GM12878 (cell line): ENCODE measurements at regions of chr3 and their contacts with region 1.

Region 1: GRCh38 chr3:33883538-33883950 is 85.1 kb downstream of the PDCD6IP start:
- DNase-seq: no peak
- ATAC-seq: peak; percentile 64
- H3K4me3 ChIP-seq: no peak overlapping the region
- H3K27ac ChIP-seq: no peak overlapping the region
- H3K4me1 ChIP-seq: peaks cover 4% of the 10 kb centered on the region; the same call in 1 of the 2 replicates
- H3K27me3 ChIP-seq: no peaks in the 10 kb centered on the region
- CTCF ChIP-seq: peak; percentile 63 to 77 (median 75)
- EP300 ChIP-seq: no peak
- POLR2A ChIP-seq: no peak
- RAD21 ChIP-seq: peak; percentile 78

Region 2: GRCh38 chr3:33915791-33916546 is 32.4 kb after region 1 on chr3:
- CTCF ChIA-PET with region 1: interaction called, 14 read pairs
- POLR2A ChIA-PET with region 1: no interaction called
- RAD21 ChIA-PET with region 1: interaction called, 6 read pairs
- SMC1A ChIA-PET with region 1: no interaction called
- in situ Hi-C with region 1: no loop called
- intact Hi-C with region 1: no loop called
- DNase-seq: no peak
- ATAC-seq: peak; percentile 80
- H3K4me3 ChIP-seq: no peak overlapping the region
- H3K27ac ChIP-seq: no peak overlapping the region
- H3K4me1 ChIP-seq: no peaks in the 10 kb centered on the region
- H3K27me3 ChIP-seq: no peaks in the 10 kb centered on the region; a peak in 1 of 4 replicates
- CTCF ChIP-seq: peak in 2 of 3 experiments; percentile 16 to 48; a peak in 3 of 6 replicates
- EP300 ChIP-seq: no peak
- POLR2A ChIP-seq: no peak
- RAD21 ChIP-seq: peak; percentile 82

Region 3: DNA sequence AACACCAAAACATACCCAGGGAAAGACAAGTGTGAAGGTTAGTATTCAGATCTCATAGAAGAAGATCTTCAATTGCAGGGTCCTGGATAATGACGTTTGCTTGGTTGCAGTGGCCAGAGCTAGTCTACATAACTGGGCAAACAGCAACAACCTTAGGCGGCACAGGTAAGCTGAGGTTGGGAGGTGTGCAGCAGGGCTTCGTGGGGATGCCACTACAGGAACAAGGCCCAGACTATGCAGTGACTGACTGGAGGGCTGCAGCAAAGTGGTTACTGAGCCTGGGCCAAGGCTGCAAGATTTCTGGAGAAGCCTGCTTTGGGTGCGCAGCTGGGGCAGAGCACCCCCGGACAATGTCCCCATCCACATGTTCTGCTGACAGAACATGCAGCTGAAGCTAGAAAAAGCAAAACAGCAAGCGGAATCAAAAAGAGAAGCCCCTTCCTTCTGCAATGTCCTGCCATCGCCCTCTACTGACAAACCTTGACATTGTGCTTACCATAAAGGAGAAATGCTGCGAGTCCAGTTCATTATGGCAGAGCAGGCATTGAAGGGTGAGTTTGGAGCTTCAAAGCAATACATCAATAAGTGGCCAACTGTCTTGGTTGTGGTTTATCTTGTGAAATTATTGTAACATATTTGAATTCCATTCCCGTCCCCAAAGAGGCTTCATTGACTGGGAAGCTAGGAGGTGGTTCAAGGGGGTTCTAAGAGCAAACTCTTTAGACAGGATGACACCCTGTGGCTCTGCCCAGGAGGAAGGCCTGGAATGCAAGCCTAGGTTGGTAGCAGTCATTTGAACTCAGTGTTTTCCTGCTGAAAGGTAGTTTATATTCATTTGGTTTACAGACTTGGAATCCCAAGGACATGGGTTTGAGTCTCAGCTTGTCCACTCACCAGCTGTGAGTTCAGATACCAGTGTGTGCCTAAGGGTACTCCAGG is 131.9 kb after region 1 on chr3:
- CTCF ChIA-PET with region 1: interaction called, 20 read pairs
- POLR2A ChIA-PET with region 1: no interaction called
- RAD21 ChIA-PET with region 1: interaction called, 3 read pairs
- SMC1A ChIA-PET with region 1: interaction called, 10 read pairs
- in situ Hi-C with region 1: no loop called
- intact Hi-C with region 1: loop called (anchors 5 kb)
- DNase-seq: no peak
- ATAC-seq: peak; percentile 53; the same call in 2 of the 3 replicates
- H3K4me3 ChIP-seq: no peak overlapping the region
- H3K27ac ChIP-seq: no peak overlapping the region
- H3K4me1 ChIP-seq: peaks cover 10% of the 10 kb centered on the region; the same call in 1 of the 2 replicates
- H3K27me3 ChIP-seq: no peaks in the 10 kb centered on the region
- CTCF ChIP-seq: peak; percentile 5 to 54 (median 21); a peak in 4 of 6 replicates
- EP300 ChIP-seq: no peak
- POLR2A ChIP-seq: no peak
- RAD21 ChIP-seq: peak; percentile 35

Region 4: GRCh38 chr3:34106879-34107278 is 223.3 kb after region 1 on chr3:
- CTCF ChIA-PET with region 1: interaction called, 9 read pairs
- POLR2A ChIA-PET with region 1: no interaction called
- RAD21 ChIA-PET with region 1: interaction called, 11 read pairs
- SMC1A ChIA-PET with region 1: interaction called, 3 read pairs
- in situ Hi-C with region 1: no loop called
- intact Hi-C with region 1: no loop called
- DNase-seq: peak; percentile 51
- ATAC-seq: peak; percentile 73
- H3K4me3 ChIP-seq: no peak overlapping the region
- H3K27ac ChIP-seq: peak overlapping the region; percentile 60
- H3K4me1 ChIP-seq: peaks cover 36% of the 10 kb centered on the region
- H3K27me3 ChIP-seq: no peaks in the 10 kb centered on the region
- CTCF ChIP-seq: peak; percentile 57 to 78 (median 69)
- EP300 ChIP-seq: no peak
- POLR2A ChIP-seq: no peak
- RAD21 ChIP-seq: peak; percentile 69

Region 5: DNA sequence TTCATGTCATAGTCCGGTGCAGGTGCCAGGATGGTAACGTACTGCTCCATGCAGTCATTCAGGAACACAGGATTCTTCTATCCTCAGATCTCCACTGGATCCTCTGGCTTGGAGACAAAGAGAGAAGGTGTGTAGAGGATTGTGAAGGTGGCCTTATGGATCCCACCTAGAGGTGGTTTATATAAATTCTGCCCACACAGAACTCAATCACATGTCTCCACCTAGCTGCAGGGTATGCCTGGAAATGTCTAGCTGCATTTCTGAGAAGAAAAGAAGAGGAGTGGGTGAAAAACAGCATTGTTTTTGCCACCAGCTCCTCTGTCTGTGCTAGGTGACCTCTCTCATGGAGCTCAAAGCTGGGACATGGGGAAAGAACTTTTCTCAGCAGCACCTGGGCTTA is 393.6 kb after region 1 on chr3:
- CTCF ChIA-PET with region 1: interaction called, 11 read pairs
- POLR2A ChIA-PET with region 1: no interaction called
- RAD21 ChIA-PET with region 1: no interaction called
- SMC1A ChIA-PET with region 1: interaction called, 3 read pairs
- in situ Hi-C with region 1: no loop called
- intact Hi-C with region 1: no loop called
- DNase-seq: no peak
- ATAC-seq: peak; percentile 46; the same call in 2 of the 3 replicates
- H3K4me3 ChIP-seq: no peak overlapping the region
- H3K27ac ChIP-seq: no peak overlapping the region
- H3K4me1 ChIP-seq: no peaks in the 10 kb centered on the region
- H3K27me3 ChIP-seq: no peaks in the 10 kb centered on the region
- CTCF ChIP-seq: peak in 2 of 3 experiments; percentile 7 to 49; a peak in 2 of 6 replicates
- EP300 ChIP-seq: no peak
- POLR2A ChIP-seq: no peak
- RAD21 ChIP-seq: peak; percentile 45

Region 6: DNA sequence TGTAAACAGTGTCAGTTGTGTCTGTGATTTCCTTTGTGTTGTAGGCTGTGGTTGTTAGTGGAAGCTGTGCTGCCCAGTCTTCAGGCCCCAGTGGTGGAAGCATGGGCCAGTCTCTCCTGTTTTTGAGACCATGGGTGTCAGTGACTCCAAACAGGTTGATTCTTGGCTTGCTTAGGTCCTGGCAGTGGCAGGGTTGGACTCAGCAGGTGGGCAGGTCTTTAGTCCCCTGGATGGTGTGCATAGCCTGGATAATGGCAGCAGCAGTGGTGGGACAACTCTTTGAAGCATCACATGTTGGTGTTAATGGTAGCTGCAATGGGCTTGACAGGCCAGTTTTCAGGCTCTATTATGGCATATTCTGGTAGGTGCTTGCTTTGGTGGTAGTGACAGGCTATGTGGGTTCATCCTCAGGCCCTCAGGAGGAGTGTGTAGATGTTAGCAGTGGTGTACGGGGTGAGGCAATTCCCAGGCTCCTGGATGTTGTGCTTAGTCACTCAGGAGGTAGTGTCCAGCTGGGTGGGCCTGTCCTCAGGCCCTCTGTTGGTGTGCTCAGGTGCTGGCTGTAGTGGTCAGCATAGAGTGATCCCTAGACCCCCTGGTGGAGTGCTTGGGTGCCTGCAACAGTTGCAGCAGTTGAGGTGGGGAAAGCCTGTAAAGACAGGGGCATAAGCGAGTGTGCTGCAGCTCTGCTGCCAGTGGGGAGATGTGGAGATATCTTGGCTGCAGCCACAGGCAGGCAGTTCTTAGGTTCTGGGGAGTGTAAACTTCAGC is 511.6 kb after region 1 on chr3:
- CTCF ChIA-PET with region 1: interaction called, 3 read pairs
- POLR2A ChIA-PET with region 1: no interaction called
- RAD21 ChIA-PET with region 1: no interaction called
- SMC1A ChIA-PET with region 1: no interaction called
- in situ Hi-C with region 1: no loop called
- intact Hi-C with region 1: loop called (anchors 10 kb)
- DNase-seq: no peak
- ATAC-seq: peak; percentile 70
- H3K4me3 ChIP-seq: no peak overlapping the region
- H3K27ac ChIP-seq: no peak overlapping the region
- H3K4me1 ChIP-seq: no peaks in the 10 kb centered on the region
- H3K27me3 ChIP-seq: no peaks in the 10 kb centered on the region
- CTCF ChIP-seq: peak in 1 of 3 experiments; percentile 9; a peak in 1 of 6 replicates
- EP300 ChIP-seq: no peak
- POLR2A ChIP-seq: no peak
- RAD21 ChIP-seq: no peak

Region 7: GRCh38 chr3:34683851-34684250 is 800.3 kb after region 1 on chr3:
- CTCF ChIA-PET with region 1: interaction called, 170 read pairs
- POLR2A ChIA-PET with region 1: no interaction called
- RAD21 ChIA-PET with region 1: interaction called, 66 read pairs
- SMC1A ChIA-PET with region 1: interaction called, 60 read pairs
- in situ Hi-C with region 1: loop called (anchors 5 kb)
- intact Hi-C with region 1: loop called (anchors 1 kb)
- DNase-seq: peak; percentile 9
- ATAC-seq: peak; percentile 87
- H3K4me3 ChIP-seq: no peak overlapping the region
- H3K27ac ChIP-seq: no peak overlapping the region
- H3K4me1 ChIP-seq: no peaks in the 10 kb centered on the region
- H3K27me3 ChIP-seq: no peaks in the 10 kb centered on the region
- CTCF ChIP-seq: peak; percentile 51 to 68 (median 65); a peak in 5 of 6 replicates
- EP300 ChIP-seq: no peak
- POLR2A ChIP-seq: no peak
- RAD21 ChIP-seq: peak; percentile 70